Activated CD8-positive, alpha-beta memory T cell treated with anti-CD3 and anti-CD28 coated beads, Interleukin-2, amount 10 ng/mL, durations not matched to agents 7 days and 5 days (primary cell): ENCODE measurements at regions of chr18 and their contacts with region 1.

Region 1: DNA sequence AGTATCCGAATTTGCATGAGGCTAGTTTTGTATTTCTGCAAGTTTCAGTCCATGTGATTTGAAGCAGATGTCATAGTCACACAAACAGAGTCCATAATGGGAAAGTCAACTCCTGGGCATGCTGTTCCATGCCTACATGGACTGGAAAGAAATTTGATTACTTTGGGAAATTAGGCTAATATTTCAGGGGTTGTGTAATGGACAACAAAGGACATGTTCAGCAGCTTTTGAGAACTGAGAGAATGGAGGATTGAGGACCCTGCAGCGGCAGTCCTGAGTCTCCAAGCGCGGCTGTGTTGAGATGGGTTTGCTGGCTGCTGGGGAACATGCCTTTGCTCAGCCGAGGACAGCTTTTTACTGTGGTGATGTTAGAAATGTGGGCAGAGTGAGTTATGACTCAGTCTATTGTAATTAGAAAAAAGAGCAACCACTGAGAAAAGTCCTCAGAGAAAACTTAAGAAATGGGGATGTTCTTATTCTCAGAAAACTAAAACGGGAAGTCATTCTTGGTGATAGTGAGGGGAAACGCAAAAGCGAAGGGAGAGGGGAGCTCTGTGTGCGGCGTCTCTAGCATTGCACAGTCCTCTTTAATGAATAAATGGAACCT is 149.2 kb downstream of the FAM210A start:
- DNase-seq: peak; percentile 79
- ATAC-seq: peak; percentile 88
- H3K4me3 Mint-ChIP-seq: peak overlapping the region; percentile 68
- H3K27ac Mint-ChIP-seq: peak overlapping the region; percentile 97
- H3K4me1 Mint-ChIP-seq: peaks cover 76% of the 10 kb centered on the region
- H3K27me3 Mint-ChIP-seq: no peaks in the 10 kb centered on the region

Region 2: GRCh38 chr18:13566941-13567746 is 10.1 kb before region 1 on chr18:
- CTCF ChIA-PET with region 1: interaction called, 14 read pairs
- DNase-seq: peak; percentile 81
- ATAC-seq: peak; percentile 58
- H3K4me3 Mint-ChIP-seq: peak overlapping the region; percentile 67
- H3K27ac Mint-ChIP-seq: peak overlapping the region; percentile 99
- H3K4me1 Mint-ChIP-seq: peaks cover 84% of the 10 kb centered on the region
- H3K27me3 Mint-ChIP-seq: no peaks in the 10 kb centered on the region

Region 3: DNA sequence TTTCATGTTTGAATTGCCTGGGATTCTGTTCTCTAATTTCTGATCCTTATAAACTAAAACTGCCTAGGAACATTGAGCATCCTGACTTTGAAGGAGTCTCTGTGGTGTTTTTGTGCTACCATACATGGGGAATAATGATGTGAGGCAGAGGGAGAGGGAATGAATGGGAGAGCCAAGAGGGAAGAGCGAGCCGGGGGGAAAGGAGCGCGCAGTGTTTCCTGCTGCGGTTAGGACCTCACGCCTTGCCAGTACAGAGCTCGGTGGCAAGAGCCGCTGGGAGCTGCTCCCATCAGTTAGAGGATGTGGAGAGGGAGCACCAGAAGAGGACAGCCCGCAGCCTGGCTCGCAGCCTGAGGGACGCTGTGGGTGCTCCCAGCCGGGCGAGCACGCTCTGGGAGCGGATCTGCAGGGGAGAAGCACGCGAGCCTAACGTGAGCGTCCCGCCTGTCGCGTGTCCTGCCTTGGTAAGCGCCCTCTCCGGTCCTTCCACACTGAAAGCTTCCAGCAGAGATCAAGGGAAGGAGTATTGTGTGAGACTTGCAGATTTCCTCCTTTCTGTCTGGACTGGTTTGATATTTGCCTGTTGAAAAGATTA is 34.5 kb after region 1 on chr18:
- CTCF ChIA-PET with region 1: interaction called, 68 read pairs
- DNase-seq: peak; percentile 63
- ATAC-seq: peak; percentile 6
- H3K4me3 Mint-ChIP-seq: peak overlapping the region; percentile 77
- H3K27ac Mint-ChIP-seq: peak overlapping the region; percentile 99
- H3K4me1 Mint-ChIP-seq: peaks cover 91% of the 10 kb centered on the region
- H3K27me3 Mint-ChIP-seq: no peaks in the 10 kb centered on the region